ENCODE measurements at regions of chr12 and their contacts with region 1.

Region 1: GRCh38 chr12:59403259-59403932 is 192.4 kb upstream of the SLC16A7 start:
- DNase-seq: peak; percentile 63
- H3K4me3 ChIP-seq: no peak overlapping the region
- H3K27ac ChIP-seq: no peak overlapping the region
- H3K4me1 ChIP-seq: no peaks in the 10 kb centered on the region
- CTCF ChIP-seq: peak; percentile 90

Region 2: GRCh38 chr12:59059088-59059935 is 344.1 kb before region 1 on chr12:
- CTCF ChIA-PET with region 1: no interaction called
- POLR2A ChIA-PET with region 1: no interaction called
- intact Hi-C with region 1: no loop called
- DNase-seq: no peak
- H3K4me3 ChIP-seq: no peak overlapping the region
- H3K27ac ChIP-seq: no peak overlapping the region
- H3K4me1 ChIP-seq: no peaks in the 10 kb centered on the region
- CTCF ChIP-seq: no peak

Region 3: DNA sequence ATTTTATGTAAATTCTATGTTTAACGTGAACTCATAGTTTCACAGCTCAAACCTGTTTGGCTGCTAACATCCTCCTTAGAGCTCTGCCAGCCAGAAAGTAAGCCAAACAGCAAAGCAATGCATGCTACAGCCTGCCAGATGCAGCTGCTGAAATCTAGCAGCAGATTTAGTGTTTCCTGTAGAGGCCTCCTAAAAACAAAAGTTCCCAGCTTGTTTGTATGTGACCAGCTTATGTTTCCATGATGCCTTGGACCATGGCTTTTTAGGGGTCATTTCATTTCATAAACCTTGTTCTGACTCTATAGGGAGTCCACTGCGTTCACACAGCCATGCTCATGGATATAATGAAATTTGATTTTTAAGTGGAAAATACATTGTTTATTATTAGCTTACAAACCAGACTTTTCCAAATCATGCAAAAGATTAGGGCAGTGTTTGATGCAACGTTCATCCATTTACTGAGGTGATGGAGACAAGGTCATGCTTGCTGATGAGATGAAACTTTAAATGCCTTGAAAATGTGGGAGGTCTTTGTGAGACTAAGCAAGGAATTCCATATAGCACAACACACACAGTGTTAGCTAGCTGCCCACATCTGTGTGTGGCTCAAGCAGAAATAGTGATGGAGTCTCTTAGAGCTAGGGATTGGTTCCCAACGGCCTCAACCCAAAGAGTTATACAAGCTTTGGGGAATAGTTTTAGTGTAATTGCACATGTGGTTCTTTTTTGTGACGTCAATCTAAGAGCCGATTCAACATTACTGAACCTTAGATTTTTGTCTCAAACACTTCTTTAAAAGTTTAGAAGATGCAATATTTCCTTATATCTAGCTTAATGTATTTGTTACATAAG is 325.6 kb before region 1 on chr12:
- CTCF ChIA-PET with region 1: no interaction called
- POLR2A ChIA-PET with region 1: no interaction called
- intact Hi-C with region 1: no loop called
- DNase-seq: no peak
- H3K4me3 ChIP-seq: no peak overlapping the region
- H3K27ac ChIP-seq: no peak overlapping the region
- H3K4me1 ChIP-seq: no peaks in the 10 kb centered on the region
- CTCF ChIP-seq: no peak

Region 4: GRCh38 chr12:59834659-59835474 is 431.5 kb after region 1 on chr12:
- CTCF ChIA-PET with region 1: interaction called, 3 read pairs
- POLR2A ChIA-PET with region 1: no interaction called
- intact Hi-C with region 1: loop called (anchors 5 kb)
- DNase-seq: peak; percentile 38
- H3K4me3 ChIP-seq: no peak overlapping the region
- H3K27ac ChIP-seq: no peak overlapping the region
- H3K4me1 ChIP-seq: no peaks in the 10 kb centered on the region
- CTCF ChIP-seq: peak; percentile 92